Naive thymus-derived CD4-positive, alpha-beta T cell (primary cell): ENCODE measurements at regions of chr3 and their contacts with region 1.

Region 1: GRCh38 chr3:101849051-101849720 is at the start of gene NFKBIZ:
- DNase-seq: peak; percentile 81 to 94 (median 88)
- ATAC-seq: peak; percentile 88
- H3K4me3 ChIP-seq: peak within 1 kb of the TSS; percentile 98
- H3K4me3 Mint-ChIP-seq: peak within 1 kb of the TSS; percentile 90 to 100 (median 98)
- H3K27ac ChIP-seq: peak within 1 kb of the TSS; percentile 100
- H3K27ac Mint-ChIP-seq: peak within 1 kb of the TSS; percentile 98 to 100 (median 99)
- H3K4me1 ChIP-seq: peaks cover 20 to 27% of the 10 kb centered on the region in 2 donors
- H3K4me1 Mint-ChIP-seq: peaks cover 36 to 51% (median 42%) of the 10 kb centered on the region in 7 donors
- H3K27me3 ChIP-seq: no peaks in the 10 kb centered on the region
- H3K27me3 Mint-ChIP-seq: no peaks in the 10 kb centered on the region
- total RNA-seq, gene NFKBIZ: 108 to 913 (median 140) TPM

Region 2: GRCh38 chr3:101724329-101725193 is 124.6 kb before region 1 on chr3 and contains the start of gene CEP97:
- CTCF ChIA-PET with region 1: no interaction called
- POLR2A ChIA-PET with region 1: interaction called, 8 read pairs
- intact Hi-C with region 1: loop called (anchors 1 kb)
- DNase-seq: peak; percentile 70 to 90 (median 88)
- ATAC-seq: peak; percentile 98
- H3K4me3 ChIP-seq: peak within 1 kb of the TSS; percentile 91
- H3K4me3 Mint-ChIP-seq: peak within 1 kb of the TSS; percentile 88 to 100 (median 98)
- H3K27ac ChIP-seq: peak within 1 kb of the TSS; percentile 82
- H3K27ac Mint-ChIP-seq: peak within 1 kb of the TSS; percentile 91 to 98 (median 97)
- H3K4me1 ChIP-seq: peaks cover 25 to 30% of the 10 kb centered on the region in 2 donors
- H3K4me1 Mint-ChIP-seq: peaks cover 26 to 57% (median 44%) of the 10 kb centered on the region in 7 donors
- H3K27me3 ChIP-seq: no peaks in the 10 kb centered on the region
- H3K27me3 Mint-ChIP-seq: no peaks in the 10 kb centered on the region
- total RNA-seq, gene CEP97: 5.5 to 21.7 (median 10.9) TPM

Region 3: DNA sequence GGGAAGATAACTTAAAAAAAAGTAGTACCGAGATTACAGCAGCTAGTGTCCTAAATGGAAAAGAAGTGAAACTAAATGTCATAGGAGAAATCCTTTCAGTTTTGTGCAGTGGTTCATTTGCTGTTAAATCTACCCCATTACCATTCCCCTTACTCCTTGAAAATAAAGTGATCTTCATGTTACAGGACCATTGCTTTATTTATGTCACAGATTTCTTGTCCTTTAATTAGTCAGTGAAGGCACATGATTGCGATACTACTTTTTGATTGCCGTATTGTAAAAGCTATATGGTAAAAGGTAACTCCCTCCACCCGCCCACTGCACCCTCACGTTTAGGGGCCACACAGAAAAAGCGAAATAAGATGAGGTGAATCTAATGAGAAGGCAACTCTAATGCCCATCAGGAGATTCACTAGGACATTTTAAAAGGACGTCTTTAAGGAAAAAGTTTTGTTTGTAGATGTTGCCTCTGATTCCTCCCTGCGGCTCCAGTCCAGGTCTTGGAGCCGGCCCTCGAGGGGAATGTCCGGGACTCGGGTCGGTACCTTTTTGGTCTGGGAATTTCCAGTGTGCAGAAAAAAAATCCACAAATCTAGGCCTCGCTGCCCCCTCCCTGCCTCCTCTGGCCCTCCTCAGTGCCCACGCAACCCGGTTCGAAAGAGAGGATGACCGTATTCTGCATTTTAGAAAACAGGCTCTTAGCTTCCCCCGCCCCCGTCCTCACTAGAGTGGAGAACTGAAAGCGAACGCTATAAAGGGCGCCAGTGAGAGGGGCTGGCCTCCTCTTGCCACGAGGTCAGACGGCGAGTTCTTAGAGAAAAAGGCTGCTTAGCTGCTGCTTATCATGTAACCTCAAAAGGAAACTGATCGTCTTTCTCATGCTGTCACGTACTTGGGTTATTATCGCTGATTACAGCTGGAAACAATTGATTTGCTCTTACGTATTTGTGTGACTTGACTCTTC is 21.7 kb before region 1 on chr3:
- CTCF ChIA-PET with region 1: interaction called, 6 read pairs
- POLR2A ChIA-PET with region 1: interaction called, 101 read pairs
- intact Hi-C with region 1: loop called (anchors 1 kb)
- DNase-seq: peak; percentile 52 to 86 (median 73)
- ATAC-seq: peak; percentile 86
- H3K4me3 ChIP-seq: peak overlapping the region; percentile 66
- H3K4me3 Mint-ChIP-seq: peak overlapping the region; percentile 85 to 97 (median 95)
- H3K27ac ChIP-seq: peak overlapping the region; percentile 88
- H3K27ac Mint-ChIP-seq: peak overlapping the region; percentile 94 to 99 (median 97)
- H3K4me1 ChIP-seq: peaks cover 13 to 28% of the 10 kb centered on the region in 2 donors
- H3K4me1 Mint-ChIP-seq: peaks cover 31 to 76% (median 63%) of the 10 kb centered on the region in 7 donors
- H3K27me3 ChIP-seq: no peaks in the 10 kb centered on the region
- H3K27me3 Mint-ChIP-seq: no peaks in the 10 kb centered on the region

Region 4: GRCh38 chr3:101928890-101929289 is 79.7 kb after region 1 on chr3:
- CTCF ChIA-PET with region 1: no interaction called
- POLR2A ChIA-PET with region 1: interaction called, 11 read pairs
- intact Hi-C with region 1: no loop called
- DNase-seq: no peak
- ATAC-seq: no peak
- H3K4me3 ChIP-seq: no peak overlapping the region
- H3K4me3 Mint-ChIP-seq: no peak overlapping the region
- H3K27ac ChIP-seq: no peak overlapping the region
- H3K27ac Mint-ChIP-seq: peak overlapping the region in 1 of 9 donors; percentile 73
- H3K4me1 ChIP-seq: peaks cover 0 to 17% of the 10 kb centered on the region in 2 donors
- H3K4me1 Mint-ChIP-seq: peaks cover 10 to 36% (median 33%) of the 10 kb centered on the region in 7 donors
- H3K27me3 ChIP-seq: no peaks in the 10 kb centered on the region
- H3K27me3 Mint-ChIP-seq: peaks cover 0 to 14% (median 0%) of the 10 kb centered on the region in 5 donors

Region 5: DNA sequence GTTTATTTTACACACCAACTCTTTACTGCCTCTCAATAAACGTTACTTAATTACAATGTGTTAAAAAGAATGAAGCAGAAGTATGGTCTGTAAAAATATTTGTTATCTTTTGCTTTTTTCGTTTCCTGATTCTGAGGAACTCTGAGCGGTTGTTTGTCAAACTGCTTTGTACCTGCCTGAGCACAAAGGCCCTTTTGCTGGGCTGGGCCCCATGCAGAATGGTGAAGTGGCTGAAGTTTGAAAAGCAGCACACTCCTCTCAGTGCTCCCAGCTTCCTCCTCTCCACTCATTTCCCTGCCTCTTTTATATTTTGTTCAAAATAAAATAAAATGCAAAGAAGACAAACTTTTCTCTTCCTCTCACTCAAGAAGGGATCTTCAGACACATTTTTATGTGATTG is 229.7 kb after region 1 on chr3:
- CTCF ChIA-PET with region 1: interaction called, 3 read pairs
- POLR2A ChIA-PET with region 1: interaction called, 28 read pairs
- intact Hi-C with region 1: loop called in 1 of 2 experiments (anchors 1 kb)
- DNase-seq: peak in 6 of 9 donors; percentile 36 to 64 (median 50)
- ATAC-seq: peak; percentile 72
- H3K4me3 ChIP-seq: peak overlapping the region; percentile 27
- H3K4me3 Mint-ChIP-seq: peak overlapping the region; percentile 47 to 82 (median 70)
- H3K27ac ChIP-seq: peak overlapping the region; percentile 74
- H3K27ac Mint-ChIP-seq: peak overlapping the region; percentile 85 to 99 (median 97)
- H3K4me1 ChIP-seq: peaks cover 0 to 44% of the 10 kb centered on the region in 2 donors
- H3K4me1 Mint-ChIP-seq: peaks cover 16 to 84% (median 72%) of the 10 kb centered on the region in 7 donors
- H3K27me3 ChIP-seq: no peaks in the 10 kb centered on the region
- H3K27me3 Mint-ChIP-seq: peaks cover 0 to 4% (median 0%) of the 10 kb centered on the region in 5 donors

Region 6: DNA sequence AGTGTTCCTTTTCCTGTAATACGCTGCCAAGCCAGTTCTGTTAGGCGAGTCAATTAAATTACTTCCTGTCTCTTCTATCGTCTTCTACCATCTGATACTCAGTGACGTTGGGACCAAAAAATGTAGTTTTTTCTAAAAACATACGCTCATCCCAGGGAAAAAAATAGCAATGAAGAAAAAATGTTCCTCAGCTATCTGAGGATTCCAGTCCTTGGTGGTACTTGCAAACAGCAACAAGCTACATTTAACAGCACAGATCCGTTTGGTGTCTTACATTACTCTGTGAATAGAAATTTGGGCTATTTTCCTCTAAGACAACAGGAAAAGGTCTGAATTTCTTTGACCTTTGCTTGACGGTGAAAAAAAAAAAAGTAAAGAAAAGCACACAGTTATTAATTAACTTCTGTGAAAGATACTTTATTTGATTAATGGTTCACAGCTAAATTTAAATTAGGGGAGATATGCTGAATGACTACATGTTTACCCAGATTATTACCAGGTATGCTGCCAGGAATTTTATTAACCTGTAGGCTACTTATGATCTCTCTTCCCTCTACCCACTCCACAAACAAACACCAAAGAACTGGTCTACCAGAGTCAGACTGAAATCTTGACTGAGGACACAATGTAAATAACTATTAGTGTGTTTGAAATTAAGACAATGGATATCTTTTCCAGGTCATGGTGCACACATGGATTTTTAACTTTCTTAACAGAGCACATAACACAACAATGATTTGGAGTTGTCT is 331.3 kb after region 1 on chr3:
- CTCF ChIA-PET with region 1: no interaction called
- POLR2A ChIA-PET with region 1: interaction called, 21 read pairs
- intact Hi-C with region 1: loop called in 1 of 2 experiments (anchors 2 kb)
- DNase-seq: peak in 6 of 9 donors; percentile 21 to 52 (median 40)
- ATAC-seq: peak; percentile 68
- H3K4me3 ChIP-seq: no peak overlapping the region
- H3K4me3 Mint-ChIP-seq: no peak overlapping the region
- H3K27ac ChIP-seq: peak overlapping the region; percentile 73
- H3K27ac Mint-ChIP-seq: no peak overlapping the region
- H3K4me1 ChIP-seq: peaks cover 0 to 18% of the 10 kb centered on the region in 2 donors
- H3K4me1 Mint-ChIP-seq: peaks cover 0 to 12% (median 5%) of the 10 kb centered on the region in 7 donors
- H3K27me3 ChIP-seq: no peaks in the 10 kb centered on the region
- H3K27me3 Mint-ChIP-seq: no peaks in the 10 kb centered on the region